Panc1 (cell line): ENCODE measurements at regions of chr9 and their contacts with region 1.

Region 1: GRCh38 chr9:108511307-108511706 is 344.5 kb downstream of the ACTL7B start:
- DNase-seq: no peak
- ATAC-seq: no peak
- H3K4me3 ChIP-seq: no peak overlapping the region
- H3K27ac ChIP-seq: no peak overlapping the region
- H3K4me1 ChIP-seq: no peaks in the 10 kb centered on the region
- H3K27me3 ChIP-seq: no peaks in the 10 kb centered on the region
- CTCF ChIP-seq: no peak

Region 2: DNA sequence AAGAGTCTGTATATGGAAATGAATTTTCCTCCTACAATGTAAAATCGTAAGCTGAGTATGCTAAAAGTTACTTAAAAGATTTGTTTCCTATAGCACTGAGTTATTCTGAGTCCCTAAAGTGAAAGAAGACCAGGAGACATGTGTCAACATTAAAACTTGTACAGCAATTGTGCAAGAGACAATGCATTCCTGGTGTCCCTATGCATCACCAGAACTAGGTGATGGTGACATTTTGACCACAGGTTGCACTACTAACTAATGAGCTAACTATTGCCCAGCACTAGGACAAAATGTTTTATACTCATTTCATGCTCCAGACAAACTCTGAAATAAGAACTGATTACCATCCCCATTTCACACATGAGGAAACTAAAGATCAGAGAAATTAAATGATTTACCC is 75.1 kb after region 1 on chr9:
- CTCF ChIA-PET with region 1: no interaction called
- POLR2A ChIA-PET with region 1: interaction called, 19 read pairs
- in situ Hi-C with region 1: no loop called
- intact Hi-C with region 1: no loop called
- DNase-seq: no peak
- ATAC-seq: no peak
- H3K4me3 ChIP-seq: no peak overlapping the region
- H3K27ac ChIP-seq: no peak overlapping the region
- H3K4me1 ChIP-seq: no peaks in the 10 kb centered on the region
- H3K27me3 ChIP-seq: no peaks in the 10 kb centered on the region
- CTCF ChIP-seq: no peak

Region 3: DNA sequence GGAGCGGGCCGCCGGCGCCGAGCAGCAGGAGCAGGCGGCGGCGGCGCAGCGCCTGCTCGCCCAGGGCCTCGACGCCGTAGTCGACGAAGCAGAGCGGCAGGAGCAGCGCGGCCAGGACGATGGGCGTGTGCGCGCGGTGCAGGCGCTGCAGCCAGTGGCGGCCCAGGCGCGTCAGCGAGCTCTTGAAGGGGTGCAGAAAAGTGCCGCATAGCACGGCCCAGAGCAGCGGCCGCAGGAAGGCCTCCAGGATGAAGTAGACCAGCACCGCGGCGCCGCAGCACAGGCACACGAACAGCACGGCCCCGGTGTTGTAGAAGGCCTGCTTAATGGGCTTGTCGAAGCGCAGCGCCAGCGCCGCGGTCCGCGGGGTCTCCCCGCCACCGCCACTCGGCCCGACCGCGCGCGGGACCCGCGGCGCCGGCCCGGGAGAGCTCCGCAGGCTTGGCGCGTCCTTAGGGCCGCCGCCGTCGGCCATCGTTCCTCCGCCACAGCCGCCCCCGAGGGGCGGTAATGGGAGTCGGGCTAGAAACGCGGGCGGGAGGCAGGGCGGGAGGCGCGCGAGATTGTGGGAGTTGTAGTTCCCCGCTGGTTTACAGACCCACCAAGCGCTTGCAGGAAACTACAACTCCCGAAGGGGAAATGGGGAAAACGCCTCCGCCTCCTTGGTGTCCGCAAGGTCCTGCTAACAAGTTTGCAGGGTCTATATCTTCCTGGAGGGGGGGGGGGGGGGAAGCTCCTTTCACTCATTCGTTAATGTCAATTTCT is 608.3 kb after region 1 on chr9 and contains the start of gene TMEM245:
- CTCF ChIA-PET with region 1: no interaction called
- POLR2A ChIA-PET with region 1: no interaction called
- in situ Hi-C with region 1: no loop called
- intact Hi-C with region 1: no loop called
- DNase-seq: peak; percentile 86
- ATAC-seq: peak; percentile 96
- H3K4me3 ChIP-seq: peak within 1 kb of the TSS; percentile 72 to 79
- H3K27ac ChIP-seq: peak within 1 kb of the TSS; percentile 93
- H3K4me1 ChIP-seq: peaks cover 32% of the 10 kb centered on the region
- H3K27me3 ChIP-seq: no peaks in the 10 kb centered on the region
- CTCF ChIP-seq: no peak
- total RNA-seq, gene TMEM245: 54.0 TPM